Naive thymus-derived CD4-positive, alpha-beta T cell (primary cell): ENCODE measurements at regions of chr14 and their contacts with region 1.

Region 1: GRCh38 chr14:50231475-50232275 is at the start of gene SOS2:
- DNase-seq: peak; percentile 71 to 84 (median 80)
- ATAC-seq: peak; percentile 92
- H3K4me3 ChIP-seq: peak within 1 kb of the TSS; percentile 89
- H3K4me3 Mint-ChIP-seq: peak within 1 kb of the TSS; percentile 80 to 97 (median 91)
- H3K27ac ChIP-seq: peak within 1 kb of the TSS; percentile 81
- H3K27ac Mint-ChIP-seq: peak within 1 kb of the TSS; percentile 90 to 96 (median 95)
- H3K4me1 ChIP-seq: peaks cover 6 to 17% of the 10 kb centered on the region in 2 donors
- H3K4me1 Mint-ChIP-seq: peaks cover 19 to 47% (median 42%) of the 10 kb centered on the region in 7 donors
- H3K27me3 ChIP-seq: no peaks in the 10 kb centered on the region
- H3K27me3 Mint-ChIP-seq: no peaks in the 10 kb centered on the region
- total RNA-seq, gene SOS2: 19.7 to 49.6 (median 38.7) TPM

Region 2: GRCh38 chr14:49189375-49189774 is 1042.3 kb before region 1 on chr14:
- CTCF ChIA-PET with region 1: no interaction called
- POLR2A ChIA-PET with region 1: no interaction called
- intact Hi-C with region 1: no loop called
- DNase-seq: no peak
- ATAC-seq: no peak
- H3K4me3 ChIP-seq: no peak overlapping the region
- H3K4me3 Mint-ChIP-seq: no peak overlapping the region
- H3K27ac ChIP-seq: no peak overlapping the region
- H3K27ac Mint-ChIP-seq: no peak overlapping the region
- H3K4me1 ChIP-seq: no peaks in the 10 kb centered on the region
- H3K4me1 Mint-ChIP-seq: no peaks in the 10 kb centered on the region
- H3K27me3 ChIP-seq: no peaks in the 10 kb centered on the region
- H3K27me3 Mint-ChIP-seq: peaks cover 0 to 23% (median 11%) of the 10 kb centered on the region in 5 donors

Region 3: DNA sequence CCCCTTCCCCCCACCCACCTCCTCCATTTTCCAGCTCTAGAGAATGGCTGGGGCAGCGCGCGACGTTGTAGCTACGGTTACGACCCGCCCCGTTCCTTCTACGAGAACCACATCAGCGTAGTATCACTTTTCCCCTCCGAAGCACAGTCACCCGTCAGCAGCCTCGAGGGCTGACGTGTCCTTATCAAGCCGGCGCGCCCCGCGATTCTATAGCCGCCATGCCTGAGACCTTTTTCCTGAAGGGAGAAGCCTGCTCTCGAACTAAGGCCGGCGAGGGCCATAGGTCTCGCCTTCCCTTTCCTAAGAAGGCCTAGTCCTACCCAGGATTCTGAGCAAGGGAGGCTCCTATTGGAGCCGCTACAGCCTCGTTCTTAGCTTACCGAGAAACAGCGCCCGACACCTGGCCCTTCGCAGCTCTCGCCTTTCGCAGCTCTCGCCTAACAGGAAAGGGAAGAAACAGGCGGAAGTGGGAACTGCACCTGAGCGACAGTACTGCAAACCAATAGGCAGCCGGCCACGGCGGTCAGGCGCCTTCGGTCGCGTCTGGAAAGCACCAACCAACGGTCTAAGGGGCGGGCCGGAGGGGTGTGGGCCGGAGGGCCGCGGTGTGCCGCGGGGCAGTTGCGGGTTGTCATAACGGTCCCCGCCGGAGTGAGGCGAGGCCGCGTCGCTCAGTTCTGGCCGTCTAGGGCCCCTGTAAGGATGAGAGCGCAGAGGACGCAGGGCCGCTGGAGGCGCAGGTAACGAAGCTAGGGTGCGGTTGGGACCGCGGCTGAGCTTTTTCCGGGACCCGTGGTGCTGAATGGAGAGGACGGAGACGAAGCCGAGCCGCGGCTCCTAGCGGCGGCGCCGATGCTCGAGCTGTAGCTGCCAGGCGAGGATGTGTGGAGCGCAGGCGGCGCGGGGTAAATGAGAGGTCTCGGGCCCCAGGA is 611.2 kb before region 1 on chr14 and contains the starts of genes MGAT2 and RPL36AL:
- CTCF ChIA-PET with region 1: no interaction called
- POLR2A ChIA-PET with region 1: no interaction called
- intact Hi-C with region 1: loop called (anchors 5 kb)
- DNase-seq: peak; percentile 89 to 95 (median 94)
- ATAC-seq: peak; percentile 92
- H3K4me3 ChIP-seq: peak within 1 kb of the TSS; percentile 98
- H3K4me3 Mint-ChIP-seq: peak within 1 kb of the TSS; percentile 94 to 99 (median 98)
- H3K27ac ChIP-seq: peak within 1 kb of the TSS; percentile 97
- H3K27ac Mint-ChIP-seq: peak within 1 kb of the TSS; percentile 95 to 100 (median 99)
- H3K4me1 ChIP-seq: peaks cover 40 to 42% of the 10 kb centered on the region in 2 donors
- H3K4me1 Mint-ChIP-seq: peaks cover 36 to 75% (median 56%) of the 10 kb centered on the region in 7 donors
- H3K27me3 ChIP-seq: no peaks in the 10 kb centered on the region
- H3K27me3 Mint-ChIP-seq: no peaks in the 10 kb centered on the region
- total RNA-seq, gene MGAT2: 16.8 to 69.3 (median 35.1) TPM
- total RNA-seq, gene RPL36AL: 177 to 429 (median 281) TPM

Region 4: GRCh38 chr14:49767562-49768300 is 463.9 kb before region 1 on chr14 and contains the start of gene KLHDC2:
- CTCF ChIA-PET with region 1: no interaction called
- POLR2A ChIA-PET with region 1: interaction called, 5 read pairs
- intact Hi-C with region 1: loop called (anchors 1 to 5 kb)
- DNase-seq: peak; percentile 84 to 94 (median 89)
- ATAC-seq: peak; percentile 88
- H3K4me3 ChIP-seq: peak within 1 kb of the TSS; percentile 62
- H3K4me3 Mint-ChIP-seq: peak within 1 kb of the TSS; percentile 95 to 99 (median 98)
- H3K27ac ChIP-seq: peak within 1 kb of the TSS; percentile 96
- H3K27ac Mint-ChIP-seq: peak within 1 kb of the TSS; percentile 98 to 100 (median 99)
- H3K4me1 ChIP-seq: peaks cover 26 to 27% of the 10 kb centered on the region in 2 donors
- H3K4me1 Mint-ChIP-seq: peaks cover 20 to 46% (median 40%) of the 10 kb centered on the region in 7 donors
- H3K27me3 ChIP-seq: no peaks in the 10 kb centered on the region
- H3K27me3 Mint-ChIP-seq: peaks cover 0 to 2% (median 0%) of the 10 kb centered on the region in 5 donors
- total RNA-seq, gene KLHDC2: 33.2 to 105 (median 84.7) TPM

Region 5: GRCh38 chr14:50116181-50116956 is 115.3 kb before region 1 on chr14 and contains the start of gene VCPKMT:
- CTCF ChIA-PET with region 1: no interaction called
- POLR2A ChIA-PET with region 1: interaction called, 5 read pairs
- intact Hi-C with region 1: loop called (anchors 1 kb)
- DNase-seq: peak; percentile 93 to 97 (median 97)
- ATAC-seq: peak; percentile 99
- H3K4me3 ChIP-seq: peak within 1 kb of the TSS; percentile 74
- H3K4me3 Mint-ChIP-seq: peak within 1 kb of the TSS; percentile 92 to 98 (median 96)
- H3K27ac ChIP-seq: peak within 1 kb of the TSS; percentile 94
- H3K27ac Mint-ChIP-seq: peak within 1 kb of the TSS; percentile 97 to 99 (median 98)
- H3K4me1 ChIP-seq: peaks cover 18 to 20% of the 10 kb centered on the region in 2 donors
- H3K4me1 Mint-ChIP-seq: peaks cover 11 to 37% (median 23%) of the 10 kb centered on the region in 7 donors
- H3K27me3 ChIP-seq: no peaks in the 10 kb centered on the region
- H3K27me3 Mint-ChIP-seq: no peaks in the 10 kb centered on the region
- total RNA-seq, gene VCPKMT: 10.3 to 25.9 (median 17.4) TPM

Region 6: GRCh38 chr14:50215400-50215799 is 16.3 kb before region 1 on chr14:
- CTCF ChIA-PET with region 1: no interaction called
- POLR2A ChIA-PET with region 1: interaction called, 5 read pairs
- intact Hi-C with region 1: loop called in 1 of 2 experiments (anchors 2 kb)
- DNase-seq: no peak
- ATAC-seq: no peak
- H3K4me3 ChIP-seq: no peak overlapping the region
- H3K4me3 Mint-ChIP-seq: no peak overlapping the region
- H3K27ac ChIP-seq: no peak overlapping the region
- H3K27ac Mint-ChIP-seq: no peak overlapping the region
- H3K4me1 ChIP-seq: no peaks in the 10 kb centered on the region
- H3K4me1 Mint-ChIP-seq: peaks cover 7 to 62% (median 45%) of the 10 kb centered on the region in 7 donors
- H3K27me3 ChIP-seq: no peaks in the 10 kb centered on the region
- H3K27me3 Mint-ChIP-seq: no peaks in the 10 kb centered on the region

Region 7: GRCh38 chr14:50254248-50254647 is 22.6 kb after region 1 on chr14:
- CTCF ChIA-PET with region 1: no interaction called
- POLR2A ChIA-PET with region 1: no interaction called
- intact Hi-C with region 1: no loop called
- DNase-seq: no peak
- ATAC-seq: no peak
- H3K4me3 ChIP-seq: no peak overlapping the region
- H3K4me3 Mint-ChIP-seq: no peak overlapping the region
- H3K27ac ChIP-seq: no peak overlapping the region
- H3K27ac Mint-ChIP-seq: no peak overlapping the region
- H3K4me1 ChIP-seq: no peaks in the 10 kb centered on the region
- H3K4me1 Mint-ChIP-seq: peaks cover 0 to 6% (median 0%) of the 10 kb centered on the region in 7 donors
- H3K27me3 ChIP-seq: no peaks in the 10 kb centered on the region
- H3K27me3 Mint-ChIP-seq: no peaks in the 10 kb centered on the region

Region 8: GRCh38 chr14:50321009-50321660 is 89.5 kb after region 1 on chr14:
- CTCF ChIA-PET with region 1: no interaction called
- POLR2A ChIA-PET with region 1: no interaction called
- intact Hi-C with region 1: loop called in 1 of 2 experiments (anchors 2 kb)
- DNase-seq: peak in 8 of 9 donors; percentile 52 to 83 (median 76)
- ATAC-seq: peak; percentile 99
- H3K4me3 ChIP-seq: peak overlapping the region; percentile 15
- H3K4me3 Mint-ChIP-seq: no peak overlapping the region
- H3K27ac ChIP-seq: peak overlapping the region; percentile 11
- H3K27ac Mint-ChIP-seq: no peak overlapping the region
- H3K4me1 ChIP-seq: peaks cover 0 to 4% of the 10 kb centered on the region in 2 donors
- H3K4me1 Mint-ChIP-seq: peaks cover 8 to 34% (median 27%) of the 10 kb centered on the region in 7 donors
- H3K27me3 ChIP-seq: no peaks in the 10 kb centered on the region
- H3K27me3 Mint-ChIP-seq: no peaks in the 10 kb centered on the region